MCF 10A (cell line): ENCODE measurements at regions of chr6 and their contacts with region 1.

Region 1: GRCh38 chr6:105179244-105180065 is at the start of gene POPDC3:
- DNase-seq: peak; percentile 56
- H3K4me3 Mint-ChIP-seq: peak within 1 kb of the TSS; percentile 72
- H3K27ac Mint-ChIP-seq: peak within 1 kb of the TSS; percentile 69
- H3K4me1 Mint-ChIP-seq: peaks cover 16% of the 10 kb centered on the region
- H3K27me3 Mint-ChIP-seq: no peaks in the 10 kb centered on the region
- CTCF ChIP-seq: no peak
- total RNA-seq, gene POPDC3: 7.3 and 7.9 TPM in 2 replicates

Region 2: DNA sequence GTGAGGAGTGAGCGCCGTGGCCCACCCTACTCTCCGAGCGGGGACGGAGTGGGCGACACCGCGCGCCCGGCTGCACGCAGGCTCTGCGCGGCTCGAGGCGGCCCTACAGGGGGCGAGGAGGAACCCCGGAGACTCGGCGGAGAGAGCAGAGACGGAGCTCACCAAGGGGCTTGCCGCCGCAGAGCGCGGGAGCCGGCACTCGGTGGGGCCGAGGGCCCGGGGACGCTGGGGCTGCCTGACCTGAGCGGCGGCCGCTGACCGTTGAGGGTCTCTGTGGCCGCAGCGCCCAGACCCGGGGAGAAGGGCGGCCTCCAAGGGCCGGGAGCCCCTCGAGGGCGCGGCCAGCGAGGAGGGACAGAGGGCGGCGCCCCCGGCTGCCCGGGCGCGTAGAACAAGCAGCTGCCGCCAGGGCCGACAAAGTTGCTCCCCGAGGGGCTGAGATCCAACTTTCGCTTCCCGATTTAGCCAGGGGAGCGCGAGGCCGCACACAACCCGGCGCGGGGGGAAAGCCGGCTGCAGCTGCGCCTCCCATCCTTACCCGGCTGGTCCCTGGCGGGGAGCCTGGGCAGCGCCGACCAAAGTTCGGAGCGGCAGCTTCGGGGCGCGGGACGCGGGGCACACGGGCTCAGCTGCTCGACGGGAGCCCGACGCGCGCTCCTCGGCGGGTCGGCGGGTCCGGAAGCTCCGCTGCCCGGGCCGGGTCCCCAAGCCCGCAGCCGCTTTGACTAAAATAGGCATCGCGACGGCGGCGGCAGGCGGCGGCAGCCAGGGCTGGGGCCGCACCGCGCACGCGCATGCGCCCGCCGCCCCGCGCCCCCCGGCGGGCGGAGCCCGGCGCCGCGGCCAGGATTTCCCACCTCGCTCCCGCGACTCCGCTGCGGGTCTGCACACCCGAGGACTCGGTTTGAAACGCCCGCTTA is 42.8 kb before region 1 on chr6:
- CTCF ChIA-PET with region 1: no interaction called
- POLR2A ChIA-PET with region 1: no interaction called
- intact Hi-C with region 1: loop called (anchors 5 kb)
- DNase-seq: peak; percentile 32
- H3K4me3 Mint-ChIP-seq: peak overlapping the region; percentile 68
- H3K27ac Mint-ChIP-seq: no peak overlapping the region
- H3K4me1 Mint-ChIP-seq: no peaks in the 10 kb centered on the region
- H3K27me3 Mint-ChIP-seq: peaks cover 6% of the 10 kb centered on the region
- CTCF ChIP-seq: peak; percentile 15

Region 3: GRCh38 chr6:105164418-105164817 is 15.0 kb before region 1 on chr6:
- CTCF ChIA-PET with region 1: interaction called, 10 read pairs
- POLR2A ChIA-PET with region 1: interaction called, 28 read pairs
- intact Hi-C with region 1: no loop called
- DNase-seq: peak; percentile 57
- H3K4me3 Mint-ChIP-seq: no peak overlapping the region
- H3K27ac Mint-ChIP-seq: no peak overlapping the region
- H3K4me1 Mint-ChIP-seq: peaks cover 10% of the 10 kb centered on the region
- H3K27me3 Mint-ChIP-seq: no peaks in the 10 kb centered on the region
- CTCF ChIP-seq: no peak

Region 4: GRCh38 chr6:105226598-105227294 is 47.3 kb after region 1 on chr6:
- CTCF ChIA-PET with region 1: no interaction called
- POLR2A ChIA-PET with region 1: no interaction called
- intact Hi-C with region 1: no loop called
- DNase-seq: no peak
- H3K4me3 Mint-ChIP-seq: no peak overlapping the region
- H3K27ac Mint-ChIP-seq: no peak overlapping the region
- H3K4me1 Mint-ChIP-seq: peaks cover 2% of the 10 kb centered on the region
- H3K27me3 Mint-ChIP-seq: peaks cover 10% of the 10 kb centered on the region
- CTCF ChIP-seq: no peak